Mammary epithelial cell (primary cell): ENCODE measurements at regions of chr4 and their contacts with region 1.

Region 1: DNA sequence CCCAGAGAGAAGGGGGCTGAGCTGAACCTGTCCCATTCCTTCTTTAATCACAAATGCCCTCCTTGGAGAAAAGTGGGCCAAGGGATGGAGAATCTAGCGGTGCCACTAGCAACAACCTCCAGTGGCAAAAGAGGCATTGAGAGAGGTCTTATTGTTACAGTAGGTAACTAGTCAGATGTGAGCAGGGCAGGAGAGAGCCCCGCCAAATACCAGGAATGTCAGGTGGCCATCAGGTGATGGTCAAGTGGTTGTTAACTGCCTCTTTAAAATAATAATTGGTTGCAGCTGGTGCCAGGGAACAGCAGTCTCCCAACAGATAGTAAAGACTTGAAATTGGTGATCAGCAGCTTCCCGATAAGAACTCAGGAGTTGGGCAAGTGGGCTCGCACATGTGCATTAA is 116.1 kb downstream of the EVC2 start:
- DNase-seq: no peak
- H3K4me3 ChIP-seq: no peak overlapping the region
- H3K27ac ChIP-seq: no peak overlapping the region
- H3K4me1 ChIP-seq: no peaks in the 10 kb centered on the region
- H3K27me3 ChIP-seq: no peaks in the 10 kb centered on the region
- CTCF ChIP-seq: no peak

Region 2: DNA sequence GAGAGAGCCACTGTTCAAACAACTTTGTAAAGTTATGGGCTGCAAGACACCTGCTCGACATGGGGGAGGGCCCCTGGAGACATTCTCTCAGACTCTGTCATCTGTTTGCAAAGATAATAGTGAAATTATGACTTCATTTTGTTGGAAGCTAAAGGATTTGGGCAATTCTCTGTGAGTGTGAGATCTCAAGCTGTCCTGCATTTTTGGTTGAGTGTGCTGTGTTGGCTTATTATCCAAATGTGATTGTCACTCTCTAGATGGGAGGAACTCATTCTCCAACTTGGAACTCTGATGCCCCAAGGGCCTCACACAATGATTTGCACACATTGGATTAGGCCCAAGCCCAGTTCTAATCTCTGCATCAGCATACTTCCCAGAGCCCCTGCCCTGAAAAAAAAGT is 477.3 kb before region 1 on chr4:
- CTCF ChIA-PET with region 1: no interaction called
- dilution Hi-C with region 1: no loop called
- in situ Hi-C with region 1: no loop called
- intact Hi-C with region 1: no loop called
- DNase-seq: no peak
- H3K4me3 ChIP-seq: no peak overlapping the region
- H3K27ac ChIP-seq: no peak overlapping the region
- H3K4me1 ChIP-seq: no peaks in the 10 kb centered on the region
- H3K27me3 ChIP-seq: no peaks in the 10 kb centered on the region
- CTCF ChIP-seq: no peak

Region 3: DNA sequence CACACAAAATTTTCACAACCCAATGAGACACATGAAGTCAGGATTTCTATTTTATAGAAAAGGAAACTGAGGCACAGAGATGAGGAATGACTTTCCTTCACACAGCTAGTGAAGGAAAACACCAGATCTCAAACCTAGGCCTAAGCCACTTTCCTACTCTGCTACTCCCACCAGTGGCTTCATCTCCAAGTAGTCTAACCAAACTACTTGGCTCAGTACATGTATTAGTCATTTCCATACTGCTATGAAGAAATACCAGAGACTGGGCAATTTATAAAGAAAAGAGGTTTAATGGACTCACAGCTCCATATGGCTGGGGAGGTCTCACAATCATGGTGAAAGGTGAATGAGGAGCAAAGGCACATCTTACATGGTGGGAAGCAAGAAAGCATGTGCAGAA is 80.5 kb before region 1 on chr4:
- CTCF ChIA-PET with region 1: no interaction called
- dilution Hi-C with region 1: no loop called
- in situ Hi-C with region 1: no loop called
- intact Hi-C with region 1: no loop called
- DNase-seq: peak; percentile 43
- H3K4me3 ChIP-seq: no peak overlapping the region
- H3K27ac ChIP-seq: no peak overlapping the region
- H3K4me1 ChIP-seq: no peaks in the 10 kb centered on the region
- H3K27me3 ChIP-seq: no peaks in the 10 kb centered on the region
- CTCF ChIP-seq: no peak

Region 4: DNA sequence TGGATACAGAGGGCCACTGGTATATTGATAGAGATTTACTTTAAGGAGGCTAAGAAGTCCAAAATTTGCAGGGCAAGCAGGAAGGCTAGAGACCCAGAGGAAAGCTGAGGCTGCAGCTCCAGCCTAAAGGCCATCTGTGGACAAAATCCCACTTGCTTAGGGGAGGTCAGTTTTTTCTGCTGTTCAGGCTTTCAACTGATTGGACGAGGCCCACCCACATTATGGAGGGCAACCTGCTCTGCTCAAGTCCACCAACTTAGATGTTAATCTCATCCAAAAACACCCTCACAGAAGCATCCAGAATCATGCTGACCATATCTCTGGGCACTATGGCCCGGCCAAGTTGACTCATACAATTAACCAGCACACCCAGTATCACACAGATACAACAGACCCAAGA is 60.2 kb before region 1 on chr4:
- CTCF ChIA-PET with region 1: no interaction called
- dilution Hi-C with region 1: loop called (anchors 5 kb)
- in situ Hi-C with region 1: no loop called
- intact Hi-C with region 1: no loop called
- DNase-seq: no peak
- H3K4me3 ChIP-seq: no peak overlapping the region
- H3K27ac ChIP-seq: no peak overlapping the region
- H3K4me1 ChIP-seq: no peaks in the 10 kb centered on the region
- H3K27me3 ChIP-seq: no peaks in the 10 kb centered on the region
- CTCF ChIP-seq: no peak